ENCODE measurements at regions of chr15 and their contacts with region 1.

Region 1: DNA sequence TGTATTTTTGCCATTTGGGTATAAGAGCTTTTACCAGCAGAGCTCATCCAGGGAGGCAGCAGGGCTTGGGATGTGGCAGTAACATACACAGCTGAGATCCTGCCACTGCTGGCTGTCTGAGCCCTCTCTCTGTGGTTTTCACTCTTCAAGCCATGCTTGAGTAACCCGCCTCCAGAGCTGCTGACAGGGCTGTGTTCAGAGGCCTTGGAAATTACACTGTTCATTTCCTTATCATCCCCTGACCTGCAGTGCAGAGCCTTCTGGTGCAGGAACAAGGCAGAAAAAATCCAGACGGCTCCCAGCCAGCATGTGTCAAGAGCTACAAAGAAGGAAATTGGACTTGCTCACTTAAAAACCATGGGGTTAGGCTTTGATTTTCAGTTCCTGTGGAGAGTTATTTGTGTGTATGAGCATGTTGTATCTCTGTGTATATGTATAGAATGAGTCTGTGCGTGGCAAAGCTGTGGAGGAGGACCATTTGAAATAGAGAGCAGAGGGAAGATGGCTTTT is 47.0 kb downstream of the ZNF609 start:
- DNase-seq: peak in 6 of 9 experiments; percentile 23 to 58 (median 34)
- ATAC-seq: peak; percentile 68
- H3K4me3 ChIP-seq: no peak overlapping the region
- H3K4me3 Mint-ChIP-seq: peak overlapping the region; percentile 16
- H3K27ac ChIP-seq: no peak overlapping the region
- H3K27ac Mint-ChIP-seq: peak overlapping the region; percentile 64
- H3K4me1 ChIP-seq: peaks cover 85% of the 10 kb centered on the region
- H3K4me1 Mint-ChIP-seq: peaks cover 78% of the 10 kb centered on the region
- H3K27me3 ChIP-seq: no peaks in the 10 kb centered on the region
- H3K27me3 Mint-ChIP-seq: no peaks in the 10 kb centered on the region
- CTCF ChIP-seq: no peak

Region 2: DNA sequence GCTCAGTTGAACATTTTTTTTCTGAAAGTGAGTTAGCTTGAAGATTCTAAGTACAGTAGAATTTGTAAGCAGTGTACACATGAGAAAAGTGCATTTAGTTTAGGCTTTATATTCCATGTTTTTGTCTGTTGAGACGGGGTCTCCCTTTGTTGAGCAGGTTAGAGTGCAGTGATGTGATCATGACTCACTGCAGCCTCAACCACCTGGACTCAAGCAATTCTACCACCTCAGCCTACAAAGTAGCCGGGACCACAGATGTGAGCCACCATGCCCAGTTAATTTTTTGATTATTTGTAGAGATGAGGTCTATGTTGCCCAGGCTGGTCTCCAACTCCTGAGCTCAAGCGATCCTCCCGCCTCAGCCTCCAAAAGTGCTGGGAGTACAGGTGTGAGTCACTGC is 146.1 kb before region 1 on chr15:
- CTCF ChIA-PET with region 1: no interaction called
- POLR2A ChIA-PET with region 1: no interaction called
- intact Hi-C with region 1: no loop called
- DNase-seq: no peak
- ATAC-seq: no peak
- H3K4me3 ChIP-seq: no peak overlapping the region
- H3K4me3 Mint-ChIP-seq: no peak overlapping the region
- H3K27ac ChIP-seq: no peak overlapping the region
- H3K27ac Mint-ChIP-seq: no peak overlapping the region
- H3K4me1 ChIP-seq: no peaks in the 10 kb centered on the region
- H3K4me1 Mint-ChIP-seq: peaks cover 5% of the 10 kb centered on the region
- H3K27me3 ChIP-seq: no peaks in the 10 kb centered on the region
- H3K27me3 Mint-ChIP-seq: no peaks in the 10 kb centered on the region
- CTCF ChIP-seq: no peak

Region 3: DNA sequence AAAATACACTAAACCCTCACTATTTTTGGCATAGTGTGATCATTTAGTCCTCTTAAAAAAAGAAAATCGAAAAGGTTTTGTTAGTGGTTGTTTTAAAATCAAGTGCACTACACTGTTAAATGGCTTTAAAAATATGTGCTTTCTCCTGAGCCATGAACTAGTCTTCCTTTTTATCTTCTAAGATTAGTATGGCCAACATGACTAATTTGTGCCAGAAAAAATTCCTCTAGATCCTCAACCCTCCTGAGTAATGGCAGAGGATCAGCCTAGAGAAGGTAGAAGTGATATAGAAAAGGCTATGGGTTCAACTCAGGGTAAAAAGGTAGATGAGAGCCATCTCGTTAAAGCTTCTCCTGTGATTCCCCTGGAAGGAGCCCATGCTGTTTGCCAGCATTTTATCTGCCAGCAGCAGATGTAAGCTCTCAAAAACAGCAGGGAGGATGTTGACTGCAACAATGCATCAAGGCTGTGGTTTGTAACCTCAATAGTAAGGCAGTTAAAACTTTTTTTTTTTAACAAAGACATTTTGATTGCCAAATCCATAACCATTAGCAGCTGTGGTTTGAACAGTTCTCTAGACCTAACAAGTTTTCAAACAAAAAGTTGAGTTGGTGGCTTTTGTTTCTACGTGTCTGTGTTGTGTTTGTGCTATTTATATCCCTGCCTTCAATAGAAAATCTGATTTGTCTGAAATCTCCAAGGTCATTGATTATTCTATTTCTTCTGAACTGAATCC is 77.2 kb before region 1 on chr15:
- CTCF ChIA-PET with region 1: interaction called, 5 read pairs
- POLR2A ChIA-PET with region 1: no interaction called
- intact Hi-C with region 1: loop called in 1 of 2 experiments (anchors 5 kb)
- DNase-seq: peak; percentile 1 to 88 (median 43)
- ATAC-seq: peak; percentile 89
- H3K4me3 ChIP-seq: no peak overlapping the region
- H3K4me3 Mint-ChIP-seq: peak overlapping the region; percentile 57
- H3K27ac ChIP-seq: peak overlapping the region; percentile 49 to 65
- H3K27ac Mint-ChIP-seq: peak overlapping the region; percentile 92
- H3K4me1 ChIP-seq: peaks cover 52% of the 10 kb centered on the region
- H3K4me1 Mint-ChIP-seq: peaks cover 44% of the 10 kb centered on the region
- H3K27me3 ChIP-seq: no peaks in the 10 kb centered on the region
- H3K27me3 Mint-ChIP-seq: no peaks in the 10 kb centered on the region
- CTCF ChIP-seq: no peak

Region 4: GRCh38 chr15:64521726-64522164 is 14.4 kb after region 1 on chr15:
- CTCF ChIA-PET with region 1: no interaction called
- POLR2A ChIA-PET with region 1: interaction called, 3 read pairs
- intact Hi-C with region 1: loop called in 1 of 2 experiments (anchors 2 kb)
- DNase-seq: no peak
- ATAC-seq: no peak
- H3K4me3 ChIP-seq: no peak overlapping the region
- H3K4me3 Mint-ChIP-seq: no peak overlapping the region
- H3K27ac ChIP-seq: no peak overlapping the region
- H3K27ac Mint-ChIP-seq: no peak overlapping the region
- H3K4me1 ChIP-seq: peaks cover 50% of the 10 kb centered on the region
- H3K4me1 Mint-ChIP-seq: peaks cover 74% of the 10 kb centered on the region
- H3K27me3 ChIP-seq: no peaks in the 10 kb centered on the region
- H3K27me3 Mint-ChIP-seq: no peaks in the 10 kb centered on the region
- CTCF ChIP-seq: no peak

Region 5: DNA sequence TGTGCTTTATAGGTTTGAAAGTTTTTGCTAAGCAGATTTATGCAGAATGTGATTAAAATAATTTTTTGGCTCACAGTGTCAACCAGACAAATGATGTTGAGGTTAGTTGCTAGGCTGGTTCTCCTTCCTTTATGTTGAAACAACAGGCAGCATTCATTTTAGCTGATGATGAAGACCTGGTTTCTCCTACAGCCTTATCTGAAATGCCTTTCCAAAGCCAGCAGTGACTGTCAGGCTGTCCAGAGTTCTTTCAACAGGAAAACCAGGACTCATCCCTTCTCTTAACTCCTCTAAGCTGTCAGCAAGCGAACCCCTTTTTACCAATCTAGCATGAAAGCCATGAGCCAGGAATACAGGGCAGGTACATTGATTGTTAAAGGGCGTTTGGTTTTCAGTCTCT is 37.1 kb after region 1 on chr15:
- CTCF ChIA-PET with region 1: no interaction called
- POLR2A ChIA-PET with region 1: no interaction called
- intact Hi-C with region 1: no loop called
- DNase-seq: no peak
- ATAC-seq: no peak
- H3K4me3 ChIP-seq: no peak overlapping the region
- H3K4me3 Mint-ChIP-seq: no peak overlapping the region
- H3K27ac ChIP-seq: no peak overlapping the region
- H3K27ac Mint-ChIP-seq: peak overlapping the region; percentile 37
- H3K4me1 ChIP-seq: peaks cover 34% of the 10 kb centered on the region
- H3K4me1 Mint-ChIP-seq: peaks cover 55% of the 10 kb centered on the region
- H3K27me3 ChIP-seq: no peaks in the 10 kb centered on the region
- H3K27me3 Mint-ChIP-seq: no peaks in the 10 kb centered on the region
- CTCF ChIP-seq: no peak

Region 6: DNA sequence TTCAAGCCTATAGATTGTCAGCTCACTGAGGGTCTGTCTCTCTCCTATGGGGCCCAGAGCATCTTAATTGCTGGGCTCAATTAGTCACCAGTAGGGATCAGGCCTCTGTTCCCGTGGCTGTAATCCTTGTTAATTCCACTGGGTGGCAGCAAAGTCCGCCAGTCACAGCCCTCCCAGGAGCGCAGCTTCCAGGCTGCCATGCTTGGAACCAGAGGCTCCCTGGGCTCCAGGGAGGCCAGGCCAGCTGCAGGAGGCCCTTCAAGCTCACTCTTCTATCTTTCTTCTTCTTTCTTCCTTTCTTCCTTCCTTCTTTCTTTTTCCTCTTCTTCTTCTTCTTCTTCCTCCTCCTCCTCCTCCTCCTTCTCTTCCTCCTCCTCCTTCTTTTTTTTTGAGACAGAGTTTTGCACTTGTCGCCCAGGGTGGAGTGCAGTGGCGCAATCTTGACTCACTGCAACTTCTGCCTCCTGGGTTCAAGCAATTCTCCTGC is 811.6 kb after region 1 on chr15:
- CTCF ChIA-PET with region 1: no interaction called
- POLR2A ChIA-PET with region 1: no interaction called
- intact Hi-C with region 1: no loop called
- DNase-seq: peak; percentile 60 to 83 (median 75)
- ATAC-seq: peak; percentile 100
- H3K4me3 ChIP-seq: no peak overlapping the region
- H3K4me3 Mint-ChIP-seq: no peak overlapping the region
- H3K27ac ChIP-seq: no peak overlapping the region
- H3K27ac Mint-ChIP-seq: no peak overlapping the region
- H3K4me1 ChIP-seq: no peaks in the 10 kb centered on the region
- H3K4me1 Mint-ChIP-seq: peaks cover 2% of the 10 kb centered on the region
- H3K27me3 ChIP-seq: no peaks in the 10 kb centered on the region
- H3K27me3 Mint-ChIP-seq: peaks cover 4% of the 10 kb centered on the region
- CTCF ChIP-seq: peak; percentile 86

Measured in CD8-positive, alpha-beta T cell (primary cell).